Cardiac septum (tissue), 1 donor: ENCODE measurements at regions of chr21 and their contacts with region 1.

Region 1: DNA sequence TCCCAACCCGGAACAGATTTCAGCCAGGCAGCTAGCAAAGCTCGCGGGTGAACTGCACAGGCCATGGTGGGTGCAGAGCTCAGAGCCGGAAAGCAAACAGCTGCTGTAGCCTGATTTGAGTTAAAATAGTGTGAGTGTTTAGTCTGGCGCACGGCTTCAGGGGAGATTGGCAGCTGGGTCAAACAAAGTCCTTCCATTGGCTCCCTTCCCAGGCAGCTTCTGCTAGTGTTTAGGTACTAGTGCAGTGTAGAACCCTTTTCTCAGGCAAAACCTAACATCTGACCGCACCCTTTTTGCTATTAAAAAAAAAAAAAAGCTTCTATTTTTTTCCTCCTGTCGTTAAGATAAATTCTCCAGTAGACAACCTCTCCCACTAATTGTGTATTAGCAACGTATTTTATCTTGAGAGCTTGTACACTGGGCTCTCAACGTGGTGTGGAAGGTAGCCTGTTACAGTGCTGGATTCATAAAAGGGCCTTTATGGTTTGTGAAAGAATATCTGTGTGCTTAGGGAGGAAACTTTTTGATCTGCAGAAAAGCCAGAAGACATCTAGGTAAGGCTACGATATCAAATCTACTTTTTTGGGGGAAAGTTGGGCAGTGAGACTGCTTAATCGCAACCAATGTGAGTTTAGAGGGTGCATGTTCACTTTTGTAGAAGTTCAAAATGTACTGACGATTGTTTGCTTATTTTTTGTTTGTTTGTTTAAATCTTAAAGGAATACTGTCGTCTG is 689.6 kb downstream of the USP25 start:
- DNase-seq: peak; percentile 84

Region 2: DNA sequence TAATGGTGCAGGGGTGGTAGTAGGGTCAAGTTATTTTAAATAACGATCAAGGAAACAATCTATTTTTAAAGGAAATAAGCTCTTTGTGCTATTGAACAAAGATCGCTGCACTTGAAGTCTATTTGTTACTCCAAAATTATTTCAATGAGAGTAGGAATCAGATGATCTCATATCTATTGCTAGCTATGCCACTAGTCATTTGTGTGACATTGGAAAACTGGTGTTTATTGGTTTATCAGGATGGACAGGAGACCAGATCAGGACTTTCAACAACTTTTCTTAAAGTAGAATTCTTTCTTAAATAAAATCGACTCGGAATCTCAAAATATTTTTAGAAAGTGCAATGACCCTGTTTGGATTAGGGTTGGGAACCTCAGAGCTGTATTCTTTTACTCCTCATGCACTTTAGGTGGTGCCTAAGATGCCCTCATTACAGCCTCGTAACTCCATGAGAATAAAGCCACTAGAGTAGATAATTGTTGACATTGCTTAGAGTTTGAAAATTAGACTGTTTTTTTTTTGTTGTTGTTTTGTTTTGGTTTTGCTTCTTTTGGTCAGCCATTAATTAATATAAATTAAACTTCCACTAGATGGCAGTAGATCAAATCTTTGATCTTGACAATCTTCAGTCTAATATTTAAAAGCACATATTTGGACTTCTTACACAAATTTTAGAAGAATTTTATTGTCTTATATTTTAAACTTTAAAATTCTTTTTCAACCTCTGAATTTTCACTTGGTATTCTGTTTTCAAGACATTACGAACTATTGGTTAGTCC is 337.1 kb before region 1 on chr21:
- intact Hi-C with region 1: loop called (anchors 10 kb)
- DNase-seq: no peak

Region 3: DNA sequence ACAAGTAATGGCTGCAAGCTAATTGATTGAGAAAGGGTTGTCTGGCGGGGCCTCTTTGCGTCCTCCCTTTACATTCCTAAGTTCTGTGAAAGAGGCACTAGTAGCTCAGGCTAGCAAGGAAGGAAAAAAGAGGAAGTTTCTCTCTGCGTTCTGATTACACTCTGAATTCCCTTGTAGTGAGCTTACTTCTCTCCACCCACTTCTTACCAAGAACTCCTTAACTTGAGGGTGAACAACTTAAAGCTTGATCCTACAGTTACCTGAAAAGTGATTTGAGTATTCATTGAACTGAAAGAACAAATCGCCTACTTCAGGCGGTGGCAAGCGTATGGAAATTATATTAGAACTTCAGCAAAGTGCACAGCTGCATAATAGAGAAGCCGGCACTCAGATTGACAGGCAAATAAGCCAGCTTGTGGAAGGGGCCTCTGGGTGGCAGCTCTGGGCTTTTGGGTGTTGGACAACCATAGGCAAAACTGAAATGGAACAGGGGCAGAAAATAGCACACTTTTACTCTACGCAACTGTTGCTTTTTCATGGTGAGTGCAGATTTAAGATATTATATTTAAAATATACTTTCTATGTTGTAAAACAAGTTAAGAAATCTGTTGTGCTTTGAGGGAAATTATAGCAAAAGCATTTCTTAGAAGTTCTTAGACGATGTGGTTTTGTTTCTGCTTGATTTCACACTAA is 225.1 kb before region 1 on chr21:
- intact Hi-C with region 1: loop called (anchors 2 kb)
- DNase-seq: peak; percentile 82

Region 4: GRCh38 chr21:16377120-16377658 is 42.2 kb before region 1 on chr21:
- intact Hi-C with region 1: loop called (anchors 5 kb)
- DNase-seq: no peak

Region 5: DNA sequence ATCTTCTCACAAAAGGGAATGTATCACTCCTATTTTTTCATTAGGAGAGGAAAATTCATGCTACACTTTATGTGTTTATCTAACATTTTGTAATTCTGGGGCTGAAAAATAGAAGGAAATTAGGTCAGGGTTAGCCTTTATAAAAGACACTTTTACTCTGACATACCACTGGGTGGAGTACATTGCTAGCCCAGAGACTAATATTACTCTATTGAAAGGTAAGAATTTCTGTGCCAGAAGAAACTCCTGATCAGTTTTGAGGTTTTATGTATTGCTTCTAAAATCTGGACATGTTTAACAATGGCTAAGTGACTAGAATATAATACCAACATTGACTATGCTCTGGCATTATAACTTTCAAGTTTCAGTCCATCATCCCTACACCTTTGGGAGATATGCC is 35.0 kb after region 1 on chr21:
- intact Hi-C with region 1: loop called (anchors 5 kb)
- DNase-seq: no peak

Region 6: GRCh38 chr21:16473988-16474387 is 54.6 kb after region 1 on chr21:
- intact Hi-C with region 1: loop called (anchors 5 kb)
- DNase-seq: no peak

Region 7: GRCh38 chr21:16534408-16535101 is 115.2 kb after region 1 on chr21:
- intact Hi-C with region 1: loop called (anchors 1 kb)
- DNase-seq: peak; percentile 80